Activated CD4-positive, alpha-beta T cell treated with anti-CD3 and anti-CD28 coated beads, Interleukin-2, amount 10 ng/mL, durations not matched to agents 24 days and 14 days (primary cell): ENCODE measurements at regions of chr13 and their contacts with region 1.

Region 1: GRCh38 chr13:59677966-59678814 is 485.5 kb downstream of the DIAPH3 start:
- DNase-seq: peak; percentile 65
- H3K4me3 Mint-ChIP-seq: no peak overlapping the region
- H3K27ac Mint-ChIP-seq: no peak overlapping the region
- H3K4me1 Mint-ChIP-seq: no peaks in the 10 kb centered on the region
- H3K27me3 Mint-ChIP-seq: no peaks in the 10 kb centered on the region

Region 2: DNA sequence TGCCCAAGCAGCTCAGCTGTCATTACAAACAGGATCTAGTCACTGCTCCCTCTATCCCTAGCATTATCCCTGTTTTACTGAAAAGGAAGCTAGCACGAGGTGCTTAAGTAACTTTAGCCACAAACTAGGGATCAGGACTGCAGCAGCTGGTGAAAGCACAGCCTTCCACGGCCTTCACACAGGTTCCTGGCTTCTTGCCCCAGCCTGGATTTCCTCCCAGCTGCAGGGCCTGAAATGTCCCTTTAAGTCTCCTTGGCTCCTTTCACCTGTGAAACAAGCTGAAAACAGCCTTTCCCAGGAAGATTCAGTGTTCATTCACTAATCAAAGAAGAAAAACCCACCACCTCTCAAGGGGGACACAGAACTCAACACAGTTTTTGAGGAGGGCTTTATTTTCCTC is 269.0 kb before region 1 on chr13:
- intact Hi-C with region 1: no loop called
- DNase-seq: no peak
- H3K4me3 Mint-ChIP-seq: no peak overlapping the region
- H3K27ac Mint-ChIP-seq: no peak overlapping the region
- H3K4me1 Mint-ChIP-seq: no peaks in the 10 kb centered on the region
- H3K27me3 Mint-ChIP-seq: no peaks in the 10 kb centered on the region

Region 3: DNA sequence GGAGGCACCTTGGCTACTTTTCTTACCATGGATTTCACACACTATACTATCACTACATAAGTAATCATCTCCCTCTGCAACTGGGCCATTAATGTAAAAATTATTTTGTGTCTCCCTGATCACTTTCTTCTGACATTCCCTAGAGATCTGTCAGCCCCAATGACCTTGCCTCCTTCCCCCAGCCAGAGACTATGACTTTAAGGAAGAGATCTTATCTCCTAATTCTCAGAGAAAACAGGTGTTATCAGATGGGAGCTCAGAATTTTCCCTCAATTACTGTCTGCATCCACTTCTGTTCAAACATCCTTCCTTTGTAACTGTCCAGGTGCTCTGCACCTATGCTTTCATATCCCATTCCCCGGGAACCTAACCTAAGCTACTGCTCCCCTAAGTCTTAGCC is 88.0 kb after region 1 on chr13:
- intact Hi-C with region 1: no loop called
- DNase-seq: no peak
- H3K4me3 Mint-ChIP-seq: no peak overlapping the region
- H3K27ac Mint-ChIP-seq: no peak overlapping the region
- H3K4me1 Mint-ChIP-seq: no peaks in the 10 kb centered on the region
- H3K27me3 Mint-ChIP-seq: no peaks in the 10 kb centered on the region

Region 4: GRCh38 chr13:59906413-59907049 is 228.3 kb after region 1 on chr13:
- intact Hi-C with region 1: loop called (anchors 1 kb)
- DNase-seq: no peak
- H3K4me3 Mint-ChIP-seq: no peak overlapping the region
- H3K27ac Mint-ChIP-seq: no peak overlapping the region
- H3K4me1 Mint-ChIP-seq: no peaks in the 10 kb centered on the region
- H3K27me3 Mint-ChIP-seq: no peaks in the 10 kb centered on the region

Region 5: GRCh38 chr13:60335531-60335930 is 657.3 kb after region 1 on chr13:
- intact Hi-C with region 1: loop called (anchors 1 kb)
- DNase-seq: no peak
- H3K4me3 Mint-ChIP-seq: no peak overlapping the region
- H3K27ac Mint-ChIP-seq: no peak overlapping the region
- H3K4me1 Mint-ChIP-seq: no peaks in the 10 kb centered on the region
- H3K27me3 Mint-ChIP-seq: peaks cover 16% of the 10 kb centered on the region